Activated CD8-positive, alpha-beta T cell treated with anti-CD3 and anti-CD28 coated beads for 36 hours (primary cell): ENCODE measurements at regions of chr9 and their contacts with region 1.

Region 1: GRCh38 chr9:36407122-36407723 is 7.2 kb upstream of the RNF38 start:
- DNase-seq: peak; percentile 70
- ATAC-seq: peak; percentile 93
- H3K4me3 Mint-ChIP-seq: no peak overlapping the region
- H3K27ac Mint-ChIP-seq: peak overlapping the region; percentile 69
- H3K4me1 Mint-ChIP-seq: peaks cover 19% of the 10 kb centered on the region
- H3K27me3 Mint-ChIP-seq: no peaks in the 10 kb centered on the region
- CTCF ChIP-seq: peak; percentile 93

Region 2: DNA sequence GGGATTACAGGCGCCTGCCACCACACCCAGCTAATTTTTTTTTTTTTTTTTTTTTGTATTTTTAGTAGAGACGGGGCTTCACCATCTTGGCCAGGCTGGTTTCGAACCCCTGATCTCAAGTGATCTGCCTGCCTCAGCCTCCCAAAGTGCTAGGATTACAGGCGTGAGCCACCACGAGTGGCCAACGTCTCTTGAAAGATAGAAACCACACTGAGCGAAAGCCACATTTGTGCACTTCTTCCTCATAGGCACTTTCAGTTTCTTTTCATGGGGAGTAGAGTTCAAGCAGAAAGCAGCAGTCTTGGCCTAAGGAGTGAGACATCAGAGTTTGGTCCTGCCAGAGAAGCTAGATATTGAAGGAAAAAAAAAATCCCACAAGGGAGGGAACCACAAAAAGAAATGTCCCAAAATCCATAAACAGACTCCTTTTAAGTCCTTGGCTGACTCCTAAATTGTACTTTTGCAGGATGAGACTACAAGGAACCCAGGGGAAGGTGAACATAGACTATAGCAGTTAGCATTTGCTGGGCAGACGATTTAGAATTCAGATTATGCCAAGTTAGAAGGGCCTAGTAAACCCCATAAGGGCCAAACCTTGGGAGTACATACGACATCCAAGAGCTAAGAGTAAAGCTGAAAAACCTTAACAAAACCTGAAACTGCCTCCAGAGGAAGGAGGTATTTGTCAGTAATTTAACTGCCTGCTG is 314.6 kb before region 1 on chr9:
- CTCF ChIA-PET with region 1: no interaction called
- POLR2A ChIA-PET with region 1: no interaction called
- intact Hi-C with region 1: no loop called
- DNase-seq: peak; percentile 69
- ATAC-seq: peak; percentile 98
- H3K4me3 Mint-ChIP-seq: no peak overlapping the region
- H3K27ac Mint-ChIP-seq: peak overlapping the region; percentile 82
- H3K4me1 Mint-ChIP-seq: peaks cover 19% of the 10 kb centered on the region
- H3K27me3 Mint-ChIP-seq: no peaks in the 10 kb centered on the region
- CTCF ChIP-seq: no peak

Region 3: GRCh38 chr9:36276781-36277181 is 130.4 kb before region 1 on chr9:
- CTCF ChIA-PET with region 1: no interaction called
- POLR2A ChIA-PET with region 1: no interaction called
- intact Hi-C with region 1: no loop called
- DNase-seq: no peak
- ATAC-seq: no peak
- H3K4me3 Mint-ChIP-seq: no peak overlapping the region
- H3K27ac Mint-ChIP-seq: no peak overlapping the region
- H3K4me1 Mint-ChIP-seq: no peaks in the 10 kb centered on the region
- H3K27me3 Mint-ChIP-seq: no peaks in the 10 kb centered on the region
- CTCF ChIP-seq: no peak

Region 4: GRCh38 chr9:36423206-36423605 is 16.0 kb after region 1 on chr9:
- CTCF ChIA-PET with region 1: interaction called, 36 read pairs
- POLR2A ChIA-PET with region 1: no interaction called
- intact Hi-C with region 1: no loop called
- DNase-seq: no peak
- ATAC-seq: no peak
- H3K4me3 Mint-ChIP-seq: no peak overlapping the region
- H3K27ac Mint-ChIP-seq: peak overlapping the region; percentile 30
- H3K4me1 Mint-ChIP-seq: peaks cover 27% of the 10 kb centered on the region
- H3K27me3 Mint-ChIP-seq: no peaks in the 10 kb centered on the region
- CTCF ChIP-seq: no peak

Region 5: DNA sequence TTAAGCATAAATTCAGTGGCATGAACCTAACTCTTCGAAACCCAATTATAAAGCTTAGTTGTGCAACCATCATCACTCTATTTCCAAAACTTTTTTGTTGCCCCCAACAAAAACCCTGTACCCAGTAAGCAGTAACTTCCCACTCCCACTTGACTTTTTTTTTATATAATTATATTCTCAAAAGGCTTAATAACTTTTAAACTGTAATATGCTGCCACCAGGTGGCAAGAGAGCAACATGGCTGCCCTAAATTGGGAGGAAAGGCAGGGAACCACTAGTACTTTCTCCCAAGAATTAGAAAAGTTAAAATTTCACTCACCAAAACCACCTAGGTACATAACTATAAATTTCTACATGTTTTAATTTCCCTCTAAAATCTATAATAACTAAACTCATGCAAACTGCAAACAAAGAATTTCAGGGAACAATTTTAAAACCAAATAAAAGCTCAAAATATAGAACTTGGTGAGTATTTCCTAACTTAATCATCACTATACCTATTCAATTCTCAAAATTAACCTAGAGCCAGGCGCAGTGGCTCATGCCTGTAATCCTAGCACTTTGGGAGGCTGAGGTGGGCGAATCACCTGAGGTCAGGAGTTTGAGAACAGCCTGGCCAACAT is 43.0 kb after region 1 on chr9:
- CTCF ChIA-PET with region 1: interaction called, 84 read pairs
- POLR2A ChIA-PET with region 1: no interaction called
- intact Hi-C with region 1: loop called (anchors 5 kb)
- DNase-seq: peak; percentile 21
- ATAC-seq: no peak
- H3K4me3 Mint-ChIP-seq: no peak overlapping the region
- H3K27ac Mint-ChIP-seq: no peak overlapping the region
- H3K4me1 Mint-ChIP-seq: peaks cover 15% of the 10 kb centered on the region
- H3K27me3 Mint-ChIP-seq: no peaks in the 10 kb centered on the region
- CTCF ChIP-seq: peak; percentile 80

Region 6: DNA sequence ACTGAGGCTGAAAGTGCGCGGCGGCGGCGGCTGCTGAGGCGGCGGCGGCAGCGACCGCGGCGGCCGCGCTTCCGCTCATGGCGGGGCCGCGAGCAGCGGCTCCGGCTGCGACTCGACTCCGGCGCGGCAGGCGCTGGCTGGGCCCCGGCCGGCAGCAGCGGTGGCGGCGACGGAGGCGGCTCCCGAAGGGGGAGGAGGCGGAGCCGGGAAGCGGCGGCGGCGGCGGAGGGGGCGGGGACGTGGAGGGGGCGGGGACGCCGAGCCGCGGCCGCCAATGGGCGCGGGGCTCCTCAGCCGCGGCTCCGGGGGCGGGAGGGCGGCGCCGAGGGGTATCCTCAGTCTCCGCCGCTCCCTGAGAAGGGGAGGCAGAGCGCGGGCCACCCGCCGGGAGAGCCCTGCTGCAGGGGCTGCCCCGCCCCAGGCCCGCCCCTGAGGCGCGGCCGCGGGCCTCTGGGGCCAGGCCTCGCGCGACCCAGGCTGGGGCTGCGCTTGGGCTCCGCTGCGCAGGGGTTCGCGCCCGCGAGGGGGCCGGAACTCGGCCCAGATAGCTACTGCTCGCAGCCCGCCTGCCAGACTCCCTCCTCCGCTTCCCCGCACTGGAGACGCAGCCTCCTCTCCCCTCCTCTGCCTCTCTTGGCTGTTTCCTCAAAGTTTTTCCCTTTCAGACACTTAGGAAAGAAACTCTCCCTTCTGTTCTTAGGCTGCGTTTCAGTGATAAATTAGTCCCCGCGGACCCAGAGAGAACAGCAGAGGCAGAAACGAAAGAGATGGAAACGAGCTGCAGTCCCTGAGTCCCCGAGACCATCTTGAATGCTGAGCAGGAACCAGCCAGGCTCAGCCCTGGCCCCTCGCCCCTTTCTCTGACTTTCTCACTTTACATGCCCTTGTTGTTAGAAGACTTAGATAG is 80.5 kb after region 1 on chr9:
- CTCF ChIA-PET with region 1: interaction called, 24 read pairs
- POLR2A ChIA-PET with region 1: interaction called, 5 read pairs
- intact Hi-C with region 1: no loop called
- DNase-seq: peak; percentile 89
- ATAC-seq: peak; percentile 94
- H3K4me3 Mint-ChIP-seq: peak overlapping the region; percentile 96
- H3K27ac Mint-ChIP-seq: peak overlapping the region; percentile 99
- H3K4me1 Mint-ChIP-seq: peaks cover 58% of the 10 kb centered on the region
- H3K27me3 Mint-ChIP-seq: no peaks in the 10 kb centered on the region
- CTCF ChIP-seq: no peak

Region 7: GRCh38 chr9:36543916-36544315 is 136.7 kb after region 1 on chr9:
- CTCF ChIA-PET with region 1: interaction called, 296 read pairs
- POLR2A ChIA-PET with region 1: no interaction called
- intact Hi-C with region 1: no loop called
- DNase-seq: no peak
- ATAC-seq: no peak
- H3K4me3 Mint-ChIP-seq: no peak overlapping the region
- H3K27ac Mint-ChIP-seq: no peak overlapping the region
- H3K4me1 Mint-ChIP-seq: no peaks in the 10 kb centered on the region
- H3K27me3 Mint-ChIP-seq: no peaks in the 10 kb centered on the region
- CTCF ChIP-seq: no peak

Region 8: GRCh38 chr9:36572515-36573418 is 165.5 kb after region 1 on chr9 and contains the start of gene MELK:
- CTCF ChIA-PET with region 1: interaction called, 12 read pairs
- POLR2A ChIA-PET with region 1: interaction called, 3 read pairs
- intact Hi-C with region 1: loop called (anchors 5 kb)
- DNase-seq: peak; percentile 90
- ATAC-seq: peak; percentile 84
- H3K4me3 Mint-ChIP-seq: peak within 1 kb of the TSS; percentile 98
- H3K27ac Mint-ChIP-seq: peak within 1 kb of the TSS; percentile 83
- H3K4me1 Mint-ChIP-seq: peaks cover 31% of the 10 kb centered on the region
- H3K27me3 Mint-ChIP-seq: no peaks in the 10 kb centered on the region
- CTCF ChIP-seq: no peak
- total RNA-seq, gene MELK: 44.3 to 49.5 TPM